CD14-positive monocyte (primary cell): ENCODE measurements at regions of chr7 and their contacts with region 1.

Region 1: DNA sequence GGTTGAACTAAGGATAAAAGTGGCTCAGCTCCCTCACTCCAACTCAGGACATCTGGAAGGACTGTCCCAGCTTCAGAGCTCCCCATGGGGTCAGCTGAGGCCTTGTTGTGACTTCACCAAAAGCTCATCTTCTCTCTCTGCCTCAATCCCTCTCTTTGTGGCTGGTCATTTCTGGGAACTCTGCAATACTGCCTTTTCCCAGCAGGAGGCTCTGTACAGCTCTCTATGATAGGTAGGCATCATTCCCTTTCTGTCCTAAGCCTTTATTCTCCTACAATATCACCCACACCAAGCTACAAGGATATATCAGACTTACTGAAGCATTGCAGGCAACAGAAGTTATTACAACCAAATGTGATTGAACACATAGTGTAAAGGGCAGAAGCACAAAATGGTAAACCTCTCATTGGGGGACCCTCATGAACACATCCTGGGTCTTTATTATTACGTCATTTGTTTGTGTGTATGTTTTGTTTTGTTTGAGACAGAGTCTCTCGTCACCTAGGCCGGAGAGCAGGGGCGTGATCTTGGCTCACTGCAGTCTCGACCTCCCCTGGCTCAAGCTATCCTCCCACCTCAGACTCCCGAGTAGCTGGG is 36.7 kb upstream of the PRPS1L1 start:
- DNase-seq: peak; percentile 14 to 51 (median 39)
- H3K4me3 ChIP-seq: no peak overlapping the region
- H3K4me3 Mint-ChIP-seq: no peak overlapping the region
- H3K27ac ChIP-seq: no peak overlapping the region
- H3K27ac Mint-ChIP-seq: no peak overlapping the region
- H3K4me1 ChIP-seq: no peaks in the 10 kb centered on the region
- H3K4me1 Mint-ChIP-seq: no peaks in the 10 kb centered on the region
- H3K27me3 ChIP-seq: no peaks in the 10 kb centered on the region
- H3K27me3 Mint-ChIP-seq: no peaks in the 10 kb centered on the region
- CTCF ChIP-seq: peak; percentile 90

Region 2: GRCh38 chr7:18345641-18346234 is 281.4 kb after region 1 on chr7:
- intact Hi-C with region 1: loop called in 1 of 2 experiments (anchors 5 kb)
- DNase-seq: peak; percentile 17 to 55 (median 45)
- H3K4me3 ChIP-seq: no peak overlapping the region
- H3K4me3 Mint-ChIP-seq: no peak overlapping the region
- H3K27ac ChIP-seq: peak overlapping the region in 1 of 2 donors; percentile 20
- H3K27ac Mint-ChIP-seq: peak overlapping the region in 1 of 7 donors; percentile 12
- H3K4me1 ChIP-seq: peaks cover 10 to 15% of the 10 kb centered on the region in 2 donors
- H3K4me1 Mint-ChIP-seq: peaks cover 25% of the 10 kb centered on the region
- H3K27me3 ChIP-seq: no peaks in the 10 kb centered on the region
- H3K27me3 Mint-ChIP-seq: peaks cover 0 to 2% (median 0%) of the 10 kb centered on the region in 3 donors
- CTCF ChIP-seq: peak; percentile 91

Region 3: DNA sequence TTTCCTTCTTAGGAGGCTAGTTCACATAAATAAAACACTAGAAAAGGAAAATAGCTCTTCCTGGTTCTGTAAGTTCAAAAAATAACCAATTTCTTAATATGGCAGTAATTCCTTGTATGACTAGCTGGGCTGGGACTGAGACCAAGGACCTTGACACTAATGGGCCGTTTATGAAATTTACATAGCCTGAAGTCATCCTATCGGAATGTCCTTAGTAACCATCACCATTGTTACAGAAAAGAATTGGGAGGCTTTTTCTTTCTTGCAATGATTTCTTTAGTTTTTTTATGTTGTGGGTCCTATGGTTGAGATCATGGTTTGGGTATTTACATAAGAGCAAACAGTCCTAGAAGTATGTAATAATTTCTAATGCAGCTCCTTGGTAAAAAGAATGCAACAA is 344.1 kb after region 1 on chr7:
- intact Hi-C with region 1: no loop called
- DNase-seq: no peak
- H3K4me3 ChIP-seq: no peak overlapping the region
- H3K4me3 Mint-ChIP-seq: no peak overlapping the region
- H3K27ac ChIP-seq: no peak overlapping the region
- H3K27ac Mint-ChIP-seq: no peak overlapping the region
- H3K4me1 ChIP-seq: peaks cover 10 to 12% of the 10 kb centered on the region in 2 donors
- H3K4me1 Mint-ChIP-seq: peaks cover 12% of the 10 kb centered on the region
- H3K27me3 ChIP-seq: no peaks in the 10 kb centered on the region
- H3K27me3 Mint-ChIP-seq: no peaks in the 10 kb centered on the region
- CTCF ChIP-seq: no peak

Region 4: GRCh38 chr7:18700147-18700546 is 635.8 kb after region 1 on chr7:
- intact Hi-C with region 1: no loop called
- DNase-seq: no peak
- H3K4me3 ChIP-seq: no peak overlapping the region
- H3K4me3 Mint-ChIP-seq: no peak overlapping the region
- H3K27ac ChIP-seq: no peak overlapping the region
- H3K27ac Mint-ChIP-seq: no peak overlapping the region
- H3K4me1 ChIP-seq: no peaks in the 10 kb centered on the region
- H3K4me1 Mint-ChIP-seq: no peaks in the 10 kb centered on the region
- H3K27me3 ChIP-seq: no peaks in the 10 kb centered on the region
- H3K27me3 Mint-ChIP-seq: peaks cover 0 to 2% (median 0%) of the 10 kb centered on the region in 3 donors
- CTCF ChIP-seq: peak; percentile 12